IMR-90 (cell line): ENCODE measurements at regions of chr7 and their contacts with region 1.

Region 1: GRCh38 chr7:29600661-29601060 is 37.0 kb downstream of the PRR15 start:
- DNase-seq: no peak
- ATAC-seq: no peak
- H3K4me3 ChIP-seq: no peak overlapping the region
- H3K27ac ChIP-seq: no peak overlapping the region
- H3K4me1 ChIP-seq: no peaks in the 10 kb centered on the region
- H3K27me3 ChIP-seq: no peaks in the 10 kb centered on the region
- CTCF ChIP-seq: no peak
- POLR2A ChIP-seq: no peak
- RAD21 ChIP-seq: no peak

Region 2: GRCh38 chr7:28230261-28230660 is 1370.4 kb before region 1 on chr7:
- CTCF ChIA-PET with region 1: no interaction called
- POLR2A ChIA-PET with region 1: no interaction called
- dilution Hi-C with region 1: no loop called
- in situ Hi-C with region 1: no loop called
- intact Hi-C with region 1: loop called (anchors 5 kb)
- DNase-seq: no peak
- ATAC-seq: no peak
- H3K4me3 ChIP-seq: no peak overlapping the region
- H3K27ac ChIP-seq: no peak overlapping the region
- H3K4me1 ChIP-seq: no peaks in the 10 kb centered on the region
- H3K27me3 ChIP-seq: no peaks in the 10 kb centered on the region; the same call in 1 of the 2 replicates
- CTCF ChIP-seq: no peak
- POLR2A ChIP-seq: no peak
- RAD21 ChIP-seq: no peak

Region 3: DNA sequence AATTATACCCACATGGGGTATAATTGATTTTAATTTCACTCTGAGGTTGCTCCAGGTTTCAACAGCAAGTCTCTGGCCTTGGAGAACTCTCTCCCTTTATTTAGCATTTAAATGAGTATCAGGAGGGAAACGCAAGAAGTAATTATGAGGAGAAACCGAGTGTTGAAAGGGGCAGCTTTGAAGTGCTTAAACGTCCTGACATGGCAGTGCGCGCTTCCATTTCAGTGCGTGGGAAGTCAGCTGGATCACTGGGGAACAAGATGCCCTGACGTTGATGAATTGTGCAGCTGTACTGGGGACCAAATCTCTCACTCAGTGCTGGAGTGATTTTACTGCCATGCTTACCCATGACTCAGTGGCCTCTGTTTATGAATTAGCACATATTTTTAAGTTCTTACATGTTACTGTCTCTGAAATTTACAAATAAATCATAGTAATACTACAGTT is 143.1 kb before region 1 on chr7:
- CTCF ChIA-PET with region 1: no interaction called
- POLR2A ChIA-PET with region 1: no interaction called
- dilution Hi-C with region 1: no loop called
- in situ Hi-C with region 1: no loop called
- intact Hi-C with region 1: no loop called
- DNase-seq: no peak
- ATAC-seq: peak; percentile 24; the same call in 1 of the 2 replicates
- H3K4me3 ChIP-seq: no peak overlapping the region
- H3K27ac ChIP-seq: no peak overlapping the region
- H3K4me1 ChIP-seq: no peaks in the 10 kb centered on the region
- H3K27me3 ChIP-seq: no peaks in the 10 kb centered on the region
- CTCF ChIP-seq: no peak
- POLR2A ChIP-seq: no peak
- RAD21 ChIP-seq: no peak

Region 4: GRCh38 chr7:29538389-29538788 is 62.3 kb before region 1 on chr7:
- CTCF ChIA-PET with region 1: no interaction called
- POLR2A ChIA-PET with region 1: no interaction called
- dilution Hi-C with region 1: no loop called
- in situ Hi-C with region 1: no loop called
- intact Hi-C with region 1: no loop called
- DNase-seq: no peak
- ATAC-seq: no peak
- H3K4me3 ChIP-seq: no peak overlapping the region
- H3K27ac ChIP-seq: no peak overlapping the region
- H3K4me1 ChIP-seq: no peaks in the 10 kb centered on the region
- H3K27me3 ChIP-seq: no peaks in the 10 kb centered on the region
- CTCF ChIP-seq: no peak
- POLR2A ChIP-seq: no peak
- RAD21 ChIP-seq: no peak

Region 5: GRCh38 chr7:29619848-29620555 is 19.3 kb after region 1 on chr7:
- CTCF ChIA-PET with region 1: no interaction called
- POLR2A ChIA-PET with region 1: no interaction called
- dilution Hi-C with region 1: no loop called
- in situ Hi-C with region 1: no loop called
- intact Hi-C with region 1: no loop called
- DNase-seq: no peak
- ATAC-seq: no peak
- H3K4me3 ChIP-seq: no peak overlapping the region
- H3K27ac ChIP-seq: no peak overlapping the region
- H3K4me1 ChIP-seq: 0 out of 2 replicates have a peak, but pooled peaks cover 1% of the 10 kb centered on the region
- H3K27me3 ChIP-seq: no peaks in the 10 kb centered on the region; the same call in 1 of the 2 replicates
- CTCF ChIP-seq: no peak
- POLR2A ChIP-seq: no peak
- RAD21 ChIP-seq: no peak

Region 6: DNA sequence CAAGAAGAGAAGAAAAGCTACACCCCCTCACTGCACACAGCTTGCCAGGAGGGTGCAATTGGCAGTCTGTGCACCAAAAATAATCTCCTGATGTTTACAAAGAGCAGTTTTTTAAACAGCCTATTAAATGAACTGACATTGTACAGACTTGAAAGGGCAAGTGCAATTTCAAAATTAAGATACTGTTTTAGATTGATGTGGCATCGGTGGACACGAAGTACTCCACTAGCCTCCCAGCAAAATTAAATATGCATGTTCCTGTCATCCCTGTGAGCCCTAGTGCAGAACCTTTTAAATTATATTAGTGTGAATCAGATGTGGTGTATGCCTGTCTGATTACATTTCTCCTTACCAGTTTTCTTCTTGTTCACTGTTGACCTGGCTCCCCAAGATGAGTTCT is 293.6 kb after region 1 on chr7:
- CTCF ChIA-PET with region 1: no interaction called
- POLR2A ChIA-PET with region 1: no interaction called
- dilution Hi-C with region 1: no loop called
- in situ Hi-C with region 1: no loop called
- intact Hi-C with region 1: no loop called
- DNase-seq: no peak
- ATAC-seq: no peak
- H3K4me3 ChIP-seq: no peak overlapping the region
- H3K27ac ChIP-seq: no peak overlapping the region
- H3K4me1 ChIP-seq: no peaks in the 10 kb centered on the region
- H3K27me3 ChIP-seq: peaks cover 27% of the 10 kb centered on the region
- CTCF ChIP-seq: no peak
- POLR2A ChIP-seq: no peak
- RAD21 ChIP-seq: no peak